ENCODE measurements at regions of chr4 and their contacts with region 1.

Region 1: DNA sequence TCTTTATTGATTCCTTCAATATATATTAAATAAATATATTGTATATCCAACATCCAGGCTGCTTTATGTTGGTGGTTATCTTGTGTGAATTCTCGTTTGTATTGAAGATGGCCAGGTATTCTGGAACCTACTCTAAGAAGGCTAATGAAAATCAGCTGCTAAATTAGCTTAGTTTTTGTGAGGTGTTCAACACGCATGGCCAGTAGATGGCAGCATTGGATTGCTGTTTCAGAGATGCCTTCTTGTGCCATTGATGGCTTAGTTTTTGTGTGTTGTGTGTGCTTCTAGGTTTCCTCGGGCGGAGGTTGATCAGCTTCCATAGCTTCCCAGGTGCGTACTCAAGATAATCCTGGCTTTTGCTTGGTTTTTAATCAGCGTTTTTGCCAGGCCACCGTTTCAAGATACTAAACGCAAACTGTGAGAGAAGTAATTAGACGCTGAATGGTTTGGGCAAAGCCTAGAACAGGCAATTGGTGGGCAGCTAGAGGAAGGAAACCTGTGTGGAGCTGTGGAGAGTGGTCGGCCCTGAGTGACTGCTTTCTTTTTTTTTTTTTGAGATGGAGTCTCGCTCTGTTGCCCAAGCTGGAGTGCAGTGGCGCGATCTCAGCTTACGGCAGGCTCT is 15.1 kb downstream of the NOCT start:
- DNase-seq: peak; percentile 86
- H3K4me3 Mint-ChIP-seq: no peak overlapping the region
- H3K27ac Mint-ChIP-seq: peak overlapping the region; percentile 0
- H3K4me1 Mint-ChIP-seq: peaks cover 5% of the 10 kb centered on the region
- H3K27me3 Mint-ChIP-seq: no peaks in the 10 kb centered on the region

Region 2: DNA sequence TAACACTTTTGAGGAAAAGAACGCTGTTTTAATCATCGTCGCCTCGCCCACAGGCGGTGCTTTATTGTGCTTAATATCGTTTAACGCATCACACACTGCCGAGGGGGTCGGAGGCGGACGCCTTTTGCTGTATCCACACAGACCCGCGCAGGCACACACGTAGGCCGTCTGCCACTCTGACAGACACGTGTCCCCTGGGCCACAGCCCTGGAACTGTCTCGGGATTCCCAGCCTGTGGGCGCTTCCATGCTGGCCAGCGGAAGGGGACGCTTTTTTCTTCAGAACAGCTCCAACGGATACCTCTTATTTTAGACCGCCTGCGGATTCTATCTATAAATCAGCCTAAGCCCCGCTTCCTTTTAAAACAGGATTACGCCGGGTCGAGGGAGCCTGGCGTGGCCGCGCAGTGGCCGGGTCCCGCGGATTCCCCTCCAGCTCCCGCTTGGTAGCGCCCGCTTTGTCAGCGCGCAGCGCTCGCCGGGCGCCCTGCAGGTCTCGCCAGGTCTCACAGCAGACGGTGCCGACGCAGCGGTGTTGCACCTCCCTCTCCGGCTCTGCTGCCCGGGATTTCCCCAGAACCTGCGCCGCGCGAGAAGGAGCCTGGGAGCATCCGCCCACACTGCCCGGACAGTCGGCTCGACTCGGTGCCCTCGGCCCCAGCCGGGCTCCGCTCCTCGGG is 15.3 kb before region 1 on chr4 and contains the start of gene NOCT:
- CTCF ChIA-PET with region 1: interaction called, 25 read pairs
- DNase-seq: peak; percentile 95
- H3K4me3 Mint-ChIP-seq: peak within 1 kb of the TSS; percentile 87
- H3K27ac Mint-ChIP-seq: peak within 1 kb of the TSS; percentile 94
- H3K4me1 Mint-ChIP-seq: peaks cover 43% of the 10 kb centered on the region
- H3K27me3 Mint-ChIP-seq: no peaks in the 10 kb centered on the region

Region 3: DNA sequence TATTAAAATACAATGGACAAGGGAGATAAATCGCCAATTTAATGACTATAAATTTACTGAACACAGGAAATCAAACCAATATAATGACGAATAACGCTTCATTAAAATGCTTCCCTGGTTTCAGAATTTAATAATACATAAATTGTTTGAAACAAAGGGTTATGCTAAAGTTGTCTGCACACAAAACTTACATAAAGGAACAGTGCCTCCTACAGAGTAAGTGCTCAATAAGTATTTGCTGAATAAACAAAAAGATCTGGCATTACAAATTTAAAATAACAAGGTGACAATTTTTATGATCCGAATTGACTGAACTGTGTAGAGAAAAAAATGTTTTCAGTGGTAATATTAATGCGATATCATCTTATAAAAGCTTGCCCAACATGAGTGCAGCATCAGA is 54.4 kb after region 1 on chr4:
- CTCF ChIA-PET with region 1: interaction called, 14 read pairs
- DNase-seq: no peak
- H3K4me3 Mint-ChIP-seq: peak overlapping the region; percentile 83
- H3K27ac Mint-ChIP-seq: peak overlapping the region; percentile 100
- H3K4me1 Mint-ChIP-seq: peaks cover 32% of the 10 kb centered on the region
- H3K27me3 Mint-ChIP-seq: peaks cover 3% of the 10 kb centered on the region

Region 4: GRCh38 chr4:139099366-139099982 is 68.7 kb after region 1 on chr4:
- CTCF ChIA-PET with region 1: interaction called, 19 read pairs
- DNase-seq: peak; percentile 82
- H3K4me3 Mint-ChIP-seq: no peak overlapping the region
- H3K27ac Mint-ChIP-seq: no peak overlapping the region
- H3K4me1 Mint-ChIP-seq: no peaks in the 10 kb centered on the region
- H3K27me3 Mint-ChIP-seq: no peaks in the 10 kb centered on the region

Region 5: GRCh38 chr4:139295206-139295941 is 264.6 kb after region 1 on chr4:
- CTCF ChIA-PET with region 1: interaction called, 29 read pairs
- DNase-seq: peak; percentile 99
- H3K4me3 Mint-ChIP-seq: peak overlapping the region; percentile 82
- H3K27ac Mint-ChIP-seq: peak overlapping the region; percentile 91
- H3K4me1 Mint-ChIP-seq: peaks cover 34% of the 10 kb centered on the region
- H3K27me3 Mint-ChIP-seq: no peaks in the 10 kb centered on the region

Region 6: GRCh38 chr4:139633661-139634060 is 602.9 kb after region 1 on chr4:
- CTCF ChIA-PET with region 1: no interaction called
- DNase-seq: no peak
- H3K4me3 Mint-ChIP-seq: no peak overlapping the region
- H3K27ac Mint-ChIP-seq: no peak overlapping the region
- H3K4me1 Mint-ChIP-seq: no peaks in the 10 kb centered on the region
- H3K27me3 Mint-ChIP-seq: peaks cover 31% of the 10 kb centered on the region

Measured in activated naive CD4-positive, alpha-beta T cell treated with anti-CD3 and anti-CD28 coated beads, Interleukin-2, amount 10 ng/mL, durations not matched to agents 7 days and 5 days (primary cell).